BJ (cell line): ENCODE measurements at regions of chr18 and their contacts with region 1.

Region 1: GRCh38 chr18:49858309-49859020 is 45.1 kb upstream of the ACAA2 start:
- DNase-seq: no peak
- H3K4me3 ChIP-seq: no peak overlapping the region
- H3K27me3 ChIP-seq: peaks cover 6% of the 10 kb centered on the region
- CTCF ChIP-seq: peak; percentile 92

Region 2: GRCh38 chr18:48754993-48755473 is 1103.4 kb before region 1 on chr18:
- CTCF ChIA-PET with region 1: no interaction called
- POLR2A ChIA-PET with region 1: no interaction called
- DNase-seq: no peak
- H3K4me3 ChIP-seq: no peak overlapping the region
- H3K27me3 ChIP-seq: no peaks in the 10 kb centered on the region
- CTCF ChIP-seq: no peak

Region 3: DNA sequence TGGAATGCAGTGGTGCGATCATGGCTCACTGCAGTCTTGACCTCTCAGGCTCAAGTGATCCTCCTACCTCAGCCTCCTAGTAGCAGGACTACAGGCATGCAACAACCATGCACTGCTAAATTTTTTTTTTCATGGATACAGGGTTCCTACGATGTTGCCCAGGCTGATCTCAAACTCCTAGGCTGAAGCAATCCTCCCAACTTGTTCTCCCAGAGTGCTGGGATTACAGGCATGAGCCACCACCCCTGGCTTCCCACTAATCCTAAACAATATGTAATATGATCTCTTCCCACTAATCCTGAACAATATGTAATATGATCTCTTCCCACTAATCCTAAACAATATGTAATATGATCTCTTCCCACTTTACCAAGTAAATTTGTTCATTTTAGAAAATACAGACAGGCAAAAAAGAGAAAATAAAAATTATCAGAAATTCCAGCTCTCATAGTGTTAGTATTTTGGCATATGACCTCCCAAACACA is 337.8 kb before region 1 on chr18:
- CTCF ChIA-PET with region 1: interaction called, 258 read pairs
- POLR2A ChIA-PET with region 1: no interaction called
- DNase-seq: no peak
- H3K4me3 ChIP-seq: no peak overlapping the region
- H3K27me3 ChIP-seq: peaks cover 1% of the 10 kb centered on the region; the same call in 1 of the 2 replicates
- CTCF ChIP-seq: no peak

Region 4: GRCh38 chr18:49768051-49768391 is 90.4 kb before region 1 on chr18:
- CTCF ChIA-PET with region 1: interaction called, 12 read pairs
- POLR2A ChIA-PET with region 1: no interaction called
- DNase-seq: no peak
- H3K4me3 ChIP-seq: no peak overlapping the region
- H3K27me3 ChIP-seq: peaks cover 2% of the 10 kb centered on the region
- CTCF ChIP-seq: peak; percentile 73

Region 5: DNA sequence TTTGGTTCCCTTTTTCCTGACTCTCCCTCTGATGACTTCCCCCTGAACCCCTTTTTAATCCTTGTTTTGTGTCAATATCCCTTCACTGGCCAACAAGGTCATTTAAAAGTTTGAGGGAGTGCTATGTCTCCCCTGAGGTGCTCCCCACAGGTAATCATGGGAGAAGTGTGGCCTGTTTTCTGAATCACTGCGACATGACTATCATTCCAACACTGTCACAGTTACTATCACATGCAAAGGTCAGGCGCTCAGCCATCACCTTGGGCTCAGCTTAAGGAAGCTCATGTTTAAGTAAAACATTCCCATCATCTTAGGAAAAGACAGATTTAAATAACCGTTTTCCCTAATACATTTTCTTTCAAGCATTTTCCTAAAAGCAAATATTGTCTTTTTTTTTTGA is 24.2 kb before region 1 on chr18:
- CTCF ChIA-PET with region 1: interaction called, 10 read pairs
- POLR2A ChIA-PET with region 1: no interaction called
- DNase-seq: no peak
- H3K4me3 ChIP-seq: no peak overlapping the region
- H3K27me3 ChIP-seq: no peaks in the 10 kb centered on the region
- CTCF ChIP-seq: no peak

Region 6: GRCh38 chr18:50131591-50131990 is 273.1 kb after region 1 on chr18:
- CTCF ChIA-PET with region 1: no interaction called
- POLR2A ChIA-PET with region 1: interaction called, 10 read pairs
- DNase-seq: no peak
- H3K4me3 ChIP-seq: no peak overlapping the region
- H3K27me3 ChIP-seq: no peaks in the 10 kb centered on the region
- CTCF ChIP-seq: no peak